Activated CD4-positive, alpha-beta T cell treated with anti-CD3 and anti-CD28 coated beads for 36 hours (primary cell): ENCODE measurements at regions of chr7 and their contacts with region 1.

Region 1: DNA sequence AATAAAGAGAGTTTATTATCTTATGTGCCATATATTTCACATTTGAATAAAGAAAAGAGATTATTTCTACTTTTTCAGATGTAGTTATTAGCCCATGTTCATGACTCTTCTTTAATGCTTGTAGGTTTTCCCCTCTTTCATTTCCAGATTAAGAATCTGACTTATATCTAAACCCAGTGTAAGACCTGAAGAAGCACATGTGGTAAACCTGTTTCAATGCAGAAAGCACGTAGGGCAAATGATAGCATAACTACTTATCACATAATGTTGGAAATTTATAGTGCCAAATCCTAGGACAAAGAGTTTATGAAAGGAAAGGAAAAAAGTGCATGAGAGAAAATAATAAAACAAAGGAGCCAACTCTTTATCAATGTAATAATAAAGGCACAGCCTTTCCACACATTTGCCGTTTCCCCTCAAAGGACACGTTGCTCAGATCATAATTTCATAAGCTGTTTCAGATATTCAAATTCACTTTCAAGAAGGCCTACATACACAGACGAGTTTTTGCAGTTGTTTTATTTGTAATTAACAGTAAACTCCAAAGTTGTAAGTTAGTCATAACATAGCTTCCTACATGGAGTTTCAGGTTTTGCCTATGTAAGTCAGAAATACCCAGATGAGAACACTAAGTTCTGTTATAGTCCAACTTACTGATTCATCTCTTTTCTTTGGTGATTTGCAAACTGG is 88.8 kb upstream of the MDFIC start:
- DNase-seq: no peak
- ATAC-seq: peak; percentile 95
- H3K4me3 Mint-ChIP-seq: peak overlapping the region; percentile 27
- H3K27ac Mint-ChIP-seq: peak overlapping the region; percentile 95
- H3K4me1 Mint-ChIP-seq: peaks cover 28% of the 10 kb centered on the region
- H3K27me3 Mint-ChIP-seq: peaks cover 13% of the 10 kb centered on the region

Region 2: GRCh38 chr7:114715907-114716306 is 117.1 kb before region 1 on chr7:
- CTCF ChIA-PET with region 1: no interaction called
- POLR2A ChIA-PET with region 1: no interaction called
- intact Hi-C with region 1: loop called in 1 of 2 experiments (anchors 2 kb)
- DNase-seq: peak; percentile 19
- ATAC-seq: peak; percentile 81
- H3K4me3 Mint-ChIP-seq: no peak overlapping the region
- H3K27ac Mint-ChIP-seq: no peak overlapping the region
- H3K4me1 Mint-ChIP-seq: peaks cover 7% of the 10 kb centered on the region
- H3K27me3 Mint-ChIP-seq: peaks cover 5% of the 10 kb centered on the region

Region 3: GRCh38 chr7:114799628-114800028 is 33.4 kb before region 1 on chr7:
- CTCF ChIA-PET with region 1: no interaction called
- POLR2A ChIA-PET with region 1: interaction called, 3 read pairs
- intact Hi-C with region 1: loop called (anchors 1 kb)
- DNase-seq: peak; percentile 26
- ATAC-seq: peak; percentile 67
- H3K4me3 Mint-ChIP-seq: no peak overlapping the region
- H3K27ac Mint-ChIP-seq: peak overlapping the region; percentile 83
- H3K4me1 Mint-ChIP-seq: peaks cover 57% of the 10 kb centered on the region
- H3K27me3 Mint-ChIP-seq: peaks cover 5% of the 10 kb centered on the region

Region 4: DNA sequence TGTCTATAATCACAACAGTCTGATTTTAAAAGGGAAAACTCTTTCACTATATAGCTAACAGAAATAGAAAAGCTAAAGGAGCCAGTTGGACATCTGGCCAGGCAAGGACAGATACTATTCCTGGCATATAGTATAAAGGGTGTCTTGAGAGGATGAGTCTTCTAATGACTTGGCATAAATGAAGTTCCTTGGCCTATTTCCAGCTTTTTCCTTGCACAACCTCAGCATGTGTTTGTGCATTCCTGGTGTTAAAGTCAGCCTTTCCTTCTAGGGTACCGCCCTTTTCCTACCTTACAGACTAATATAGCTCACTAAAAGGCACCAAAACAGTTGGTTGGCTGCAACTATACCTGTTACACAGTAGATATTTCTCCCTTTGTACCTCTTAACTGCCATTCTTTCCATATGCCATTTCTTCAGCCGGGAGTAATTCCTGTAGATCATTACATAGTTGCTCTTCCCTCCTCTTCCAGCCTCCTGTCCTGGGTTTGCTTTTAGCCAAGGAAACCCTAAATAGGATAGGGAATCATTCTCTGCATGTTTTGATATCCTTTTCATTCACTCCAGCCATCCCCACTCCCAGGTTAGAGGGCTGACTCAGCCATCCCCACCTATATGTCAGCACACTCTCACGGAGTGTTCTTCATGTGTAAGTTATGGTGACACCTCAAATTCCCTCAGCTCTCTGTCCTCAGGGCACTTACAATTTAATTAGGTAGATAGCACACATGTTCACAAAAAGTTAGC is 13.3 kb before region 1 on chr7:
- CTCF ChIA-PET with region 1: no interaction called
- POLR2A ChIA-PET with region 1: interaction called, 3 read pairs
- intact Hi-C with region 1: loop called in 1 of 2 experiments (anchors 2 kb)
- DNase-seq: no peak
- ATAC-seq: no peak
- H3K4me3 Mint-ChIP-seq: no peak overlapping the region
- H3K27ac Mint-ChIP-seq: no peak overlapping the region
- H3K4me1 Mint-ChIP-seq: peaks cover 30% of the 10 kb centered on the region
- H3K27me3 Mint-ChIP-seq: no peaks in the 10 kb centered on the region

Region 5: GRCh38 chr7:114889646-114890285 is 56.7 kb after region 1 on chr7:
- CTCF ChIA-PET with region 1: no interaction called
- POLR2A ChIA-PET with region 1: no interaction called
- intact Hi-C with region 1: loop called in 1 of 2 experiments (anchors 1 kb)
- DNase-seq: peak; percentile 14
- ATAC-seq: peak; percentile 99
- H3K4me3 Mint-ChIP-seq: no peak overlapping the region
- H3K27ac Mint-ChIP-seq: peak overlapping the region; percentile 75
- H3K4me1 Mint-ChIP-seq: peaks cover 44% of the 10 kb centered on the region
- H3K27me3 Mint-ChIP-seq: no peaks in the 10 kb centered on the region

Region 6: GRCh38 chr7:114916261-114916892 is 83.3 kb after region 1 on chr7:
- CTCF ChIA-PET with region 1: no interaction called
- POLR2A ChIA-PET with region 1: no interaction called
- intact Hi-C with region 1: loop called (anchors 1 kb)
- DNase-seq: peak; percentile 74
- ATAC-seq: peak; percentile 91
- H3K4me3 Mint-ChIP-seq: peak overlapping the region; percentile 44
- H3K27ac Mint-ChIP-seq: peak overlapping the region; percentile 94
- H3K4me1 Mint-ChIP-seq: peaks cover 59% of the 10 kb centered on the region
- H3K27me3 Mint-ChIP-seq: no peaks in the 10 kb centered on the region

Region 7: DNA sequence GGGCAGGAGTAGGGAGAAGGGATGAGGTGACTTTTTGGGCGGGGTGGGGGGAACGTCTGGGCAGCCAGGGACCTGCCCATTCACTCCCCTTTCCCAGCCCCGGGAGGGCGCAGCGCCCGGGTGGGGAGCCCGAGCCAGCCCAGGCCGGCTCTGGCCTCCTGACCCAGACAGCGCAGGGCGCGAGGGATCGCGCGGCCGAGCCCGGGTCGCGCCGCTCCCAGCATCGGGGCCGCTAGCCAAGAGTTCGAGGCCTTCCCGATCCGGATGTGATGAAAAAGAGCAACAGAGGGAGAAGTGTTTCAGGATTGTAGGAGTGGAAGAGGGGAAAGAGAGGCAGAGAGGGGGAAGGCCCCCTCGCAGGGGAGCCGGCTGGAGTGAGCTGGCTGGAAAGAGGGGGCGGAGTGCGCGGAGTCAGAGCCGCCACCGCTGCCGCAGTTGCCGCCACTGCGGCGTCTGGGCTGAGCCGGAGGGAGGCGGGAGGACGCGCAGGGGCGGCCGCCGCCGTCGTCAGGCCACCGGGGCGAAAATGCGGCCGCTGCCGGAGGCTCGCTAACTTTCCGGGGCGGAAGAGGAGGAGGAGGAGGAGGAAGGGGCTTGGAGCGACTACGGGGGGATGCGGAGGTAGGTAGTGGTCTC is 89.1 kb after region 1 on chr7 and contains the start of gene MDFIC:
- CTCF ChIA-PET with region 1: no interaction called
- POLR2A ChIA-PET with region 1: no interaction called
- intact Hi-C with region 1: loop called in 1 of 2 experiments (anchors 2 kb)
- DNase-seq: peak; percentile 83
- ATAC-seq: peak; percentile 62
- H3K4me3 Mint-ChIP-seq: peak within 1 kb of the TSS; percentile 89
- H3K27ac Mint-ChIP-seq: peak within 1 kb of the TSS; percentile 96
- H3K4me1 Mint-ChIP-seq: peaks cover 63% of the 10 kb centered on the region
- H3K27me3 Mint-ChIP-seq: no peaks in the 10 kb centered on the region
- total RNA-seq, gene MDFIC: 68.4 to 113 TPM

Region 8: DNA sequence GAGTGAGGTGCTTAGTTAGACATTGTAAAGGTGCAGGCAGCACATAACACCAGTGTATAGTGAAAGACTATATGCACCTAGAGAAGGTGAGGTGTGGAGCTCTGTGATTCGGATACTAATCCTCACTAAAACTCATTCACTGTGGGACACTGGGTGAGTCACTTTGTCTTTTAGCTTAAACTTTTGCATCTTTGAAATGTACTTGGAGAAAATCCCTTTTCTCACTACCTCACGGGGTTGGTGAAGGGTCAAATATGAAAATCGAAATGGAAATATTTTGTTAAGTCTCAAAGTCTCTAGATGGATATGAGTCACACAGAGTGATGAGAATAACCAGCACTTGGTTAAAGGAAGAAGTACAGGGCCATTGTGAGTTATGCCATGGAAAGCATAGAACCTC is 126.9 kb after region 1 on chr7:
- CTCF ChIA-PET with region 1: no interaction called
- POLR2A ChIA-PET with region 1: no interaction called
- intact Hi-C with region 1: no loop called
- DNase-seq: no peak
- ATAC-seq: peak; percentile 80
- H3K4me3 Mint-ChIP-seq: no peak overlapping the region
- H3K27ac Mint-ChIP-seq: no peak overlapping the region
- H3K4me1 Mint-ChIP-seq: peaks cover 55% of the 10 kb centered on the region
- H3K27me3 Mint-ChIP-seq: no peaks in the 10 kb centered on the region